Heart right ventricle (tissue), 16 donors: ENCODE measurements at regions of chr4 and their contacts with region 1.

Region 1: DNA sequence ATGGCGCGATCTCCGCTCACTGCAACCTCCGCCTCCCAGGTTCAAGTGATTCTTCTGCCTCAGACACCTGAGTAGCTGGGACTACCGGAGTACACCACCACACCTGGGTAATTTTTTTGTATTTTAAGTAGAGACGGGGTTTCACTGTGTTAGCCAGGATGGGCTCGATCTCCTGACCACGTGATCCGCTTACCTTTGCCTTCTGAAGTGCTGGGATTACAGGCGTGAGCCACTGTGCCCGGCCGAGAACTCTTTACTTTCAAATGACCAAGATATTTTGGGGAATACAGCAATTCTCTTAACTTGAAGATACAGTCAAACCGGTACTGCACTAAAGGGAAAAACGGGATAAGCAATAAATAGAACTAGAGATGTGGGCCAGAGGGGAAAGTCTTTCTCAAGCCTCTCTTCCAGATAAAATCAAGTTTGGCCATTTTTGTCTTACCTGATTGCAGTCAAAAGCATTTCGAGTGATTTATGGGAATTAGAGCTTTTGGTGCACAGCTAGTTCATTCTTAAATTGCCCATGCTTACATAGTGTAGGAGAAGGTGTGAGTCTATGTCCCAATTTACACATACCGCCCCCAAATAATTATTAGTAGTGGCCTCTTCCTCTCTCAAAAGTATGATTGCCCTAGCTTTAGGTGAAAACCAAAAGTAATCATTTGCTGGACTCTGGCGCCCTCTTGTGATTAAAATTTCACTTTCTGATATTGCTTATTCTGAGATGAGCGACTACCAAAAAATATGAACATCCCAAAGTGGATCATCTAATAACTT is 53.2 kb upstream of the ABCG2 start:
- DNase-seq: peak in 1 of 2 donors; percentile 56
- ATAC-seq: peak in 7 of 8 donors; percentile 38 to 77 (median 70)
- H3K4me3 ChIP-seq: no peak overlapping the region
- H3K27ac ChIP-seq: no peak overlapping the region
- H3K4me1 ChIP-seq: peaks cover 0 to 4% (median 0%) of the 10 kb centered on the region in 9 donors
- H3K27me3 ChIP-seq: no peaks in the 10 kb centered on the region
- CTCF ChIP-seq: peak; percentile 54 to 88 (median 76)

Region 2: GRCh38 chr4:87856816-87857215 is 354.8 kb before region 1 on chr4:
- intact Hi-C with region 1: loop called in 9 of 10 experiments (anchors 1 to 10 kb)
- DNase-seq: no peak
- ATAC-seq: no peak
- H3K4me3 ChIP-seq: no peak overlapping the region
- H3K27ac ChIP-seq: no peak overlapping the region
- H3K4me1 ChIP-seq: peaks cover 0 to 21% (median 0%) of the 10 kb centered on the region in 9 donors
- H3K27me3 ChIP-seq: no peaks in the 10 kb centered on the region
- CTCF ChIP-seq: no peak

Region 3: GRCh38 chr4:88033309-88033708 is 178.4 kb before region 1 on chr4:
- intact Hi-C with region 1: loop called (anchors 2 to 10 kb)
- DNase-seq: peak in 1 of 2 donors; percentile 54
- ATAC-seq: peak in 5 of 8 donors; percentile 29 to 60 (median 47)
- H3K4me3 ChIP-seq: no peak overlapping the region
- H3K27ac ChIP-seq: no peak overlapping the region
- H3K4me1 ChIP-seq: peaks cover 0 to 10% (median under 1%) of the 10 kb centered on the region in 9 donors
- H3K27me3 ChIP-seq: no peaks in the 10 kb centered on the region
- CTCF ChIP-seq: peak; percentile 42 to 82 (median 67)

Region 4: GRCh38 chr4:88378691-88379559 is 167.3 kb after region 1 on chr4 and contains the start of gene HERC6:
- intact Hi-C with region 1: loop called in 1 of 10 experiments (anchors 5 kb)
- DNase-seq: peak; percentile 74 to 85
- ATAC-seq: peak; percentile 94 to 98 (median 96)
- H3K4me3 ChIP-seq: peak within 1 kb of the TSS; percentile 91 to 100 (median 96)
- H3K27ac ChIP-seq: peak within 1 kb of the TSS; percentile 95 to 100 (median 98)
- H3K4me1 ChIP-seq: peaks cover 0 to 14% (median 0%) of the 10 kb centered on the region in 9 donors
- H3K27me3 ChIP-seq: no peaks in the 10 kb centered on the region
- CTCF ChIP-seq: peak; percentile 50 to 89 (median 80)
- total RNA-seq, gene HERC6: 8.9 to 20.0 (median 15.8) TPM

Region 5: DNA sequence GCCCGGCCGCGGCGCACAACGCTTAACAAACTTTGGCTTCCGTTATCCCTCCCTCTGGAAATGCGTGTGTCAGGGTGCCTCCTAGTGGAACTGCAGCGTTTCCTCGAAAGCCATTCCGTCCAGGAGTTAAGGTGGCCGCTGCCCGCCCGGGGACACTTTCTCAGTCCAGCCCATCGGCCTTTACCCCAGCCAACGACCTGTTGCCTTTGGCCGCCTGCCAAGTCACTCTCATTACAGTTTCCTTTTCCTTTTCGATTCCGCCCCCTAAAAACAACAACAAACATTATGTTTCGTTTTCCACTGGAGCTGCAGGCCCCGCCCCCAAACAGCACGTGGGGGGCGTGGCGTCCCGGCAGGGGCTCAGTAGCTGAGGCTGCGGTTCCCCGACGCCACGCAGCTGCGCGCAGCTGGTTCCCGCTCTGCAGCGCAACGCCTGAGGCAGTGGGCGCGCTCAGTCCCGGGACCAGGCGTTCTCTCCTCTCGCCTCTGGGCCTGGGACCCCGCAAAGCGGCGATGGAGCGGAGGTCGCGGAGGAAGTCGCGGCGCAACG is 245.2 kb after region 1 on chr4 and contains the start of gene HERC5:
- intact Hi-C with region 1: loop called in 2 of 10 experiments (anchors 5 kb)
- DNase-seq: peak; percentile 91 to 97
- ATAC-seq: peak; percentile 95 to 98 (median 97)
- H3K4me3 ChIP-seq: peak within 1 kb of the TSS; percentile 55 to 84 (median 73)
- H3K27ac ChIP-seq: peak within 1 kb of the TSS in 9 of 10 donors; percentile 52 to 87 (median 78)
- H3K4me1 ChIP-seq: peaks cover 0 to 28% (median 12%) of the 10 kb centered on the region in 9 donors
- H3K27me3 ChIP-seq: no peaks in the 10 kb centered on the region
- CTCF ChIP-seq: peak; percentile 32 to 87 (median 66)
- total RNA-seq, gene HERC5: 1.6 to 4.7 (median 2.9) TPM